Right lobe of liver (tissue), 6 donors: ENCODE measurements at regions of chr9 and their contacts with region 1.

Region 1: DNA sequence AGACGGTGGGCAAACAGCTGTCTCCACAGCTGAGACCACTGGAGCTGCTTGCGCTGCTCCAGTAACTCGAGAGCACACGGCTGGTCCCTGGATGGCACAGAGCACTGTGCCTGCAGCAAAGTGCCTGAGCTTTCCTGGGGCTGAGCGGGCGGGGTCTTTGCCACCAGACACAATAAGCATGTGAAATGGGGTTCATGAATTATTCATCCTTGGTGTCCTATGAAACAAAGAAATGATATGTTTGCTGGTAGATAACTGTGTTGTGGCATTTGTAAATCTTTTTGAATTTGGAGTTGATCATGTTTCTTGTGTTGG is 151.7 kb upstream of the MPDZ start:
- DNase-seq: no peak
- ATAC-seq: no peak
- H3K4me3 ChIP-seq: no peak overlapping the region
- H3K27ac ChIP-seq: no peak overlapping the region
- H3K4me1 ChIP-seq: no peaks in the 10 kb centered on the region
- H3K27me3 ChIP-seq: no peaks in the 10 kb centered on the region
- CTCF ChIP-seq: no peak
- POLR2A ChIP-seq: no peak

Region 2: GRCh38 chr9:13322828-13323741 is 108.1 kb before region 1 on chr9:
- intact Hi-C with region 1: no loop called
- DNase-seq: no peak
- ATAC-seq: no peak
- H3K4me3 ChIP-seq: no peak overlapping the region
- H3K27ac ChIP-seq: no peak overlapping the region
- H3K4me1 ChIP-seq: no peaks in the 10 kb centered on the region
- H3K27me3 ChIP-seq: no peaks in the 10 kb centered on the region
- CTCF ChIP-seq: no peak
- POLR2A ChIP-seq: no peak

Region 3: DNA sequence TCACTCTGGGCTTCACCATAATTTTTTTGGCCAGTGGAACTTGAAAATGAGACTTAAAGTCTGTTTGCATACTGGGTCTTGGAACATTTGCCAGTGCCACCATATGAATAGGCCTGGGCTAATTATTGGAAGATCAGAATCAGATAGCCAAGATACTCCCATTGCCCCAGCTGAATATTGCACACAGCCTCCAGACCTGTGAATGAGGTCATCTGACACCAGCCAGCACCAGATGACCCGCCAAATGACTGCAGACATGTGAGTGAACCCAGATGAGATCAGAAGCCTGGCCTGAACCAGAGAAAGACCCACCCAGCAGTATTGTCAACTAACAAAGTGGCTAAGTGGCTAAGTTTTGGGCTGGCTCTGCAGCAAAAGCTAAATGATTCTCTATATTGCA is 68.9 kb after region 1 on chr9:
- intact Hi-C with region 1: no loop called
- DNase-seq: no peak
- ATAC-seq: no peak
- H3K4me3 ChIP-seq: no peak overlapping the region
- H3K27ac ChIP-seq: no peak overlapping the region
- H3K4me1 ChIP-seq: no peaks in the 10 kb centered on the region
- H3K27me3 ChIP-seq: no peaks in the 10 kb centered on the region
- CTCF ChIP-seq: no peak
- POLR2A ChIP-seq: no peak

Region 4: GRCh38 chr9:14353222-14354056 is 922.3 kb after region 1 on chr9:
- intact Hi-C with region 1: loop called in 1 of 2 experiments (anchors 10 kb)
- DNase-seq: peak; percentile 88 to 92 (median 90)
- ATAC-seq: peak; percentile 90 to 92 (median 91)
- H3K4me3 ChIP-seq: no peak overlapping the region
- H3K27ac ChIP-seq: no peak overlapping the region
- H3K4me1 ChIP-seq: peaks cover 0 to 16% (median 8%) of the 10 kb centered on the region in 4 donors
- H3K27me3 ChIP-seq: peaks cover 0 to 14% of the 10 kb centered on the region in 2 donors
- CTCF ChIP-seq: peak; percentile 84 to 95 (median 90)
- POLR2A ChIP-seq: no peak